ENCODE measurements at regions of chr19 and their contacts with region 1.

Region 1: DNA sequence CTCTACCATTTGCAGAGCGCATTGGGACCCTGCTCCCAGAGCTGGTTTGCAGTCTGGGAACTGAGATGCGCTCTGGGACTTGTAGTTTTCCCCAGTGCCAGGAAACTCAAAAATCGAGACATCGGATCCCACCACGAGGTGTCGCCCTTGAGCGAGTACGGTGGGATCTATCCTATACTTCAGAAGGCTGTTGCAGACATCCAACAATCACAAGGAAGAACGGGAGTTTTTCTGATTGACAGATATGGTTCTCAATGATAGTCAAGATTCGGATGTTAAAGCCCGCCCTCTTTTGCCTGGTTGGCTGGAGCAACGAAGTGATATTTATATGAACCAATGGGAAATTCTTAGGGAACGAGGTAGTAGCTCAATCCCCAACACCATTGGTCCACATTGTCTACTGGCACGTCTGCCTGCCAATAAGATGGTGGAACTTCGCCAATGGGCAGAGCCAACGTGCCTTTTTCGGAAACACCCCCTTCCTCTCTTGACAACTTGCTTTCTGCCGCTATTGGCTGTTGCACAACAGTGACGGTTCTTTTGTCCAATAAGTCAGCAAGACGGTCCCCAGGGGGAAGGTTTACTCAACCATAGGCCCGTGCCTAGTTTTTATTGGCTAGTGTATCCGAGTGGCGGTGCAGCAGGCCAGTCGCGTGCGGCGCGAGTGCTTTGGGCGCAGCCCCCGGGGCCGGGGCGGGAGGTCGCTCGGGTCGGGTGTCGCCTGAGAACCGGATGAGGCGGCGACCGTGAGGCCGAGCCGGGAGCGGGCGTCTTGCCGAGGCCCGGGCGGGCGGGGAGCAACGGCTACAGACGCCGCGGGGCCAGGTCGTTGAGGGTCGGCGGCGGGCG is at the start of gene DNM2:
- DNase-seq: peak; percentile 100
- H3K4me3 ChIP-seq: peak within 1 kb of the TSS; percentile 93 to 100 (median 100)
- H3K27ac ChIP-seq: peak within 1 kb of the TSS; percentile 94 to 98 (median 97)
- H3K4me1 ChIP-seq: peaks cover 0 to 44% (median 37%) of the 10 kb centered on the region in 4 donors
- H3K27me3 ChIP-seq: no peaks in the 10 kb centered on the region
- CTCF ChIP-seq: peak; percentile 45 to 88 (median 66)
- EP300 ChIP-seq: no peak
- POLR2A ChIP-seq: peak in 1 of 2 donors; percentile 24
- total RNA-seq, gene DNM2: 53.2 to 96.7 (median 64.1) TPM

Region 2: DNA sequence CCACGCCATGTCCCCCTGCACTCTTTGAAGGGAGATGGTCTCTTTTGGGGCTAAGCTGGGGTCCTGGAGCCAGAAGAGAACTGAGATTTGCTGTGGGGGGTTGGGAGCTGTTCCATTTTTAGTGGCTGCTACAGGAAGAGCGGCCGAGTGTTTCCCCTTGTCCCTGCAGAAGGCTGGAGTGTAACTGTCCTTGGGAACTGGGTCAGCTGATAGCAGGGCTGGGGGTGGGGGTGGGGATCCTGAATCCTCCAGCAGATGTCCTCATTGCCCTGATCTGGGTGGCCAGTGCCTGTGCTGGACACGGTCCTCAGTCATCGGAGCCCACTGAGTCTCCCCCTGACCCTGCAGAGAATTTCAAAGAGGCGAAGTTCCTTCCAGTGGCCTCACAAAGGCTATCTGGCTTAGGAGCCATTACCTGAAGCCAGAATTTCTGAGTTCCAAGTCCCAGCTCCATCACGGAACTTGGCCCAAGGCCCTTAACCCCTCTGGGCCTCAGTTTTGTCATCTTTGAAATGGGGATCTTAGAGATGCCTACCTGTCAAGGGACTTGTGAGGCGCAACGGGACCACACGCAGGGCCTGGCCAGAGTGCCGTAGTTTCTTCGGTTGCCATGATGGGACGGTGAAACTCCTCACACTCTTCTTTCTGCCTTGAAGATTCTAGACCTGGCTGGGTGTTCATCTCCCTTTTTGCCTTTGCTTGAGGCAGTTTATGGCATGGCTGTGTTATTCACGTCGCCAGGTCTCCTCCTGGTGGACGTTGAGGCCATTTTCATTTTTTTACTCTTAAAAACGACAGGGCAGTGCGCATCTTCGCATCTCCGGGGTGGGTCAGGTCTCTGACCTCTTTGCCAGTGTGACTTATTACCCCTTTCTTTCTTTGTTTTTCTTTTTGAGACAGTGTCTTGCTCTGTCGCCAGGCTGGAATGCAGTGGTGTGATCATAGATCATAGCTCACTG is 52.2 kb after region 1 on chr19:
- intact Hi-C with region 1: loop called (anchors 2 kb)
- DNase-seq: peak; percentile 73
- H3K4me3 ChIP-seq: no peak overlapping the region
- H3K27ac ChIP-seq: peak overlapping the region; percentile 27 to 72 (median 58)
- H3K4me1 ChIP-seq: peaks cover 0 to 45% (median 38%) of the 10 kb centered on the region in 4 donors
- H3K27me3 ChIP-seq: no peaks in the 10 kb centered on the region
- CTCF ChIP-seq: peak in 3 of 4 experiments; percentile 28 to 42 (median 29)
- EP300 ChIP-seq: no peak
- POLR2A ChIP-seq: no peak

Region 3: DNA sequence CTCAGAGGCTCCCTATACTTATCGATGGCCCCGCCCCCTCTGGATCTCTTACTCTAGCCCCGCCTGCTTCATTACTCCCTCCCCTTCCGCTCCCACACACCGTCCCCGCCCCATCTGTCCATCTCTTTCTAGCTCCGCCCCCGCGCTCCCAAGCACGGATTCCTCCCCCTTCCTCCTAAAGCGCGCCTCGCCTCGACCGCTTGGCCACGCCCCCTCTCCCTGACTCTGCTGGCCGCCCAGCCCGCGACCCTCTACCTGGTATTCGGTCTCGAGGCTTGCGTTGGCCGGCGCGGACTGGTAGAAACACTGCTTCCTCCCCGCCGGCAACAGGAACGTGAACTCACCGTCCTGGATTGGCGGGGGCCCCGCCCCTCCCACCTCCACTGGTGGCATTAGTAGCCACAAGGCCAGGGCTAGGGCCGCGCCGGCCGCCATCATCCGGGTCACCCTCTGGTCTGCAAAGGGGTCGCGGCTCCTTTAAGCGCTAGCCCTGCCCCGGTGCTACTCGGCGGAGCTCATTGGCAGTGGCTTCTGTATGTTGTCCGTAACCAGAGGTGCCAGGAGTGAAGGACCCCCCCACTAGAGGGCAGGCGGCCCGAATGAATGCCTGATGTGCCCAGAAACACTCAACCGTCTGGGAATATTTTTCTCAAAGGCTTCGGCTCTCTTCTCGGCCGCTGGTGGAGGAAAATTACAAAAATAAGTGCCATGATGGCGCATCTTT is 118.3 kb after region 1 on chr19 and contains the start of gene TMED1:
- intact Hi-C with region 1: loop called (anchors 10 kb)
- DNase-seq: peak; percentile 100
- H3K4me3 ChIP-seq: peak within 1 kb of the TSS; percentile 53 to 76 (median 62)
- H3K27ac ChIP-seq: peak within 1 kb of the TSS; percentile 95 to 99 (median 97)
- H3K4me1 ChIP-seq: peaks cover 0 to 11% (median 6%) of the 10 kb centered on the region in 4 donors
- H3K27me3 ChIP-seq: no peaks in the 10 kb centered on the region
- CTCF ChIP-seq: peak; percentile 25 to 65 (median 31)
- EP300 ChIP-seq: no peak
- POLR2A ChIP-seq: peak in 1 of 2 donors; percentile 37
- total RNA-seq, gene TMED1: 14.1 to 35.3 (median 28.9) TPM